ENCODE measurements at regions of chr11 and their contacts with region 1.

Region 1: DNA sequence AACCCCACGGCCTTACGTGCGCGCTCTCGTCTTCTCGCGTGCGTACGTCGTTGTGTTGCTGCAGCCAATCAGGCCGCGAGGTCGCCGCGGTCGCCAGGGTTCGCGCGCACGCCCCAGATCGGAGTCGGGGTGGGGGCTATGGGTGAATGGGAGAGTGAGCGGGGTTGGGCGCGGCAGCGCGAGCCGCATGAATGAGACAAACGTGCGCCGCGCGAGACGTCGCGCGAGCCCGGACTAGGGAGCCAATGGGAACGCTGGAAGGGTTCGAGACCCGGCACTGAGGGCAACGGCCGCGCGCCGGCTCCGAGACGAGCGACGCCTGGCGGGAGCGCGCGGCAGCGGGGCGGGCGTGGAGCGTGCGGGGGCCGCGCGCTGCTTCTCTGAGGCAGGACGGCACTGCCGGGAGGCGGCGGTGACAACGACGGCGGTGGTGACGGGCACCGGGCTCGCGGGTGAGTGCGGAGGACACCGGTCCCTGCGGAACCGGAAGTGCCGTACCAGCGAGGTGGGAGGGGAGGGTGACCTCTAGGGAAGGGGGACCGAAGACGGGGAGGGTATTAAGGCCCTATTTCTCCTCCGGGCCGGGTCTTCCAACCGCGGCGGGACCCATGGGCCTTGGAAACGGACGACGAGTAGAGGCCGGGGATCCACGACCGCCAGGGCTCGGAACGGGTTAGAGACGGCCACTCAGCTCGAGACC is at the start of gene ZDHHC5:
- DNase-seq: peak; percentile 92 to 100 (median 100)
- ATAC-seq: peak; percentile 90
- H3K4me3 ChIP-seq: peak within 1 kb of the TSS; percentile 87
- H3K4me3 Mint-ChIP-seq: peak within 1 kb of the TSS; percentile 84 to 100 (median 91)
- H3K27ac ChIP-seq: peak within 1 kb of the TSS; percentile 97
- H3K27ac Mint-ChIP-seq: peak within 1 kb of the TSS; percentile 97 to 100 (median 98)
- H3K4me1 ChIP-seq: peaks cover 25 to 28% of the 10 kb centered on the region in 2 donors
- H3K4me1 Mint-ChIP-seq: peaks cover 35 to 62% (median 50%) of the 10 kb centered on the region in 7 donors
- H3K27me3 ChIP-seq: no peaks in the 10 kb centered on the region
- H3K27me3 Mint-ChIP-seq: no peaks in the 10 kb centered on the region
- total RNA-seq, gene ZDHHC5: 51.4 to 82.2 (median 59.1) TPM

Region 2: GRCh38 chr11:57085611-57086010 is 582.3 kb before region 1 on chr11:
- CTCF ChIA-PET with region 1: no interaction called
- POLR2A ChIA-PET with region 1: no interaction called
- intact Hi-C with region 1: no loop called
- DNase-seq: no peak
- ATAC-seq: no peak
- H3K4me3 ChIP-seq: no peak overlapping the region
- H3K4me3 Mint-ChIP-seq: no peak overlapping the region
- H3K27ac ChIP-seq: no peak overlapping the region
- H3K27ac Mint-ChIP-seq: no peak overlapping the region
- H3K4me1 ChIP-seq: no peaks in the 10 kb centered on the region
- H3K4me1 Mint-ChIP-seq: no peaks in the 10 kb centered on the region
- H3K27me3 ChIP-seq: no peaks in the 10 kb centered on the region
- H3K27me3 Mint-ChIP-seq: peaks cover 0 to 18% (median 6%) of the 10 kb centered on the region in 5 donors

Region 3: DNA sequence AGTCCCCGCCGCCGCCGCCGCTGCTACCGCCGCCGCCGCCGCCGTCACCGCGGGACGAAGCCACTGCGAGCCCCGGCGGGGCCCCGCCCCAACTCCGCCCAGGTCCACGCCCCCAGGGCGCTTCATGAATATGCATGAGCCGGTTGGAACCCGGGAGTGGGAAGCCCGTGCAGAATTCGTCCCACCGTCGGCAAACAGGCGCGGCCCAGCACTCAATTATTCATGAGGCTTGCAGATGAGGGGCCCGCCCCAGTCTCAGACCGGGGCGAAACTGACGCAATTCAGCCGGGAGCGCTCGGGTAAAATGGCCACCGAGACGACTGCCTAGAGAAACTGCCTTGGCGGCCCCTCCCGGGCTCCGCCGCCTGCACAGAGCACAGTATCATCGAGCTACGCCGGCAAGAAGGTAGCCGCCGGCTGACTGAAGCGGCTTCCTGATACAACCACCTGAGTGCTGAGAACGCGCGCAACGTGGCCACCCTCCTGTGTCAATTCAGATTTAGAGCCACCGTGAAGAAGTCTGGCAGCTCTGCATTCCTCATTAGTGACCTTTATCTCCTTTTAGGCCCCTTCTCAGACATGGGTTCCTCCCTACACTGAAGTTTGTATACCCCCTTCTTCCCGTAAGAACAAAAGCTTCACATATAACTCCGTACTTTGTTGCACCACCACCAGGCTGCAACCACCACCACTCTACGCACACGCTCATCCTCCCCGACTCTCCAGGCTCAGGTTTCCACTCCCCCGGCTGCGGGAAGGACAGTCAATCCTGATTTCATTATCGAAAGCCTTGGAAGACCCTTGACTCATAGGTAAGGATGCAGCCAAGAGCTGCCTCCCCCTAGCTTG is 342.8 kb before region 1 on chr11 and contains the start of gene TNKS1BP1:
- CTCF ChIA-PET with region 1: no interaction called
- POLR2A ChIA-PET with region 1: no interaction called
- intact Hi-C with region 1: loop called (anchors 1 kb)
- DNase-seq: peak; percentile 84 to 92 (median 90)
- ATAC-seq: peak; percentile 91
- H3K4me3 ChIP-seq: peak within 1 kb of the TSS; percentile 73
- H3K4me3 Mint-ChIP-seq: peak within 1 kb of the TSS; percentile 88 to 95 (median 91)
- H3K27ac ChIP-seq: peak within 1 kb of the TSS; percentile 79
- H3K27ac Mint-ChIP-seq: peak within 1 kb of the TSS; percentile 93 to 98 (median 95)
- H3K4me1 ChIP-seq: peaks cover 8 to 14% of the 10 kb centered on the region in 2 donors
- H3K4me1 Mint-ChIP-seq: peaks cover 30 to 58% (median 51%) of the 10 kb centered on the region in 7 donors
- H3K27me3 ChIP-seq: no peaks in the 10 kb centered on the region
- H3K27me3 Mint-ChIP-seq: no peaks in the 10 kb centered on the region
- total RNA-seq, gene TNKS1BP1: 11.2 to 22.0 (median 15.9) TPM

Region 4: DNA sequence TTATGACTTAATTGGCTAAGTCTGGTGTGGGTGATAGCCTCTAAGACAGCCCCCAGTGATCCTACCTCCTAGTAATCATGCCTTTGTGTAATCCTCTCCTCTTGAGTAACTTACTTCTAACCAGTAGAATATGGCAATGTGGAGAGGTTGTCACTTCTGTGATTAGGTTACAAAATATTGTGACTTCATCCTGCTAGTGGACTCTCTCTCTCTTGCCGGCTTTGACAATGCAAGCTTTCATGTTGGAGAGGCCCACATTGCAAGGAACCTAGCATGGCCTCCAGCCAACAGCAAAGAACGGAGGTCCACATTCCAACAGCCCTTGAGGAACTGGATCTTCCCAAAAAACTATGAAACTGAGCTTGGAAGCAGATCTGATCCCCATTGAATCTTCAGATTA is 37.7 kb before region 1 on chr11:
- CTCF ChIA-PET with region 1: no interaction called
- POLR2A ChIA-PET with region 1: no interaction called
- intact Hi-C with region 1: no loop called
- DNase-seq: no peak
- ATAC-seq: no peak
- H3K4me3 ChIP-seq: no peak overlapping the region
- H3K4me3 Mint-ChIP-seq: no peak overlapping the region
- H3K27ac ChIP-seq: no peak overlapping the region
- H3K27ac Mint-ChIP-seq: no peak overlapping the region
- H3K4me1 ChIP-seq: no peaks in the 10 kb centered on the region
- H3K4me1 Mint-ChIP-seq: no peaks in the 10 kb centered on the region
- H3K27me3 ChIP-seq: no peaks in the 10 kb centered on the region
- H3K27me3 Mint-ChIP-seq: peaks cover 9 to 36% (median 24%) of the 10 kb centered on the region in 5 donors

Region 5: DNA sequence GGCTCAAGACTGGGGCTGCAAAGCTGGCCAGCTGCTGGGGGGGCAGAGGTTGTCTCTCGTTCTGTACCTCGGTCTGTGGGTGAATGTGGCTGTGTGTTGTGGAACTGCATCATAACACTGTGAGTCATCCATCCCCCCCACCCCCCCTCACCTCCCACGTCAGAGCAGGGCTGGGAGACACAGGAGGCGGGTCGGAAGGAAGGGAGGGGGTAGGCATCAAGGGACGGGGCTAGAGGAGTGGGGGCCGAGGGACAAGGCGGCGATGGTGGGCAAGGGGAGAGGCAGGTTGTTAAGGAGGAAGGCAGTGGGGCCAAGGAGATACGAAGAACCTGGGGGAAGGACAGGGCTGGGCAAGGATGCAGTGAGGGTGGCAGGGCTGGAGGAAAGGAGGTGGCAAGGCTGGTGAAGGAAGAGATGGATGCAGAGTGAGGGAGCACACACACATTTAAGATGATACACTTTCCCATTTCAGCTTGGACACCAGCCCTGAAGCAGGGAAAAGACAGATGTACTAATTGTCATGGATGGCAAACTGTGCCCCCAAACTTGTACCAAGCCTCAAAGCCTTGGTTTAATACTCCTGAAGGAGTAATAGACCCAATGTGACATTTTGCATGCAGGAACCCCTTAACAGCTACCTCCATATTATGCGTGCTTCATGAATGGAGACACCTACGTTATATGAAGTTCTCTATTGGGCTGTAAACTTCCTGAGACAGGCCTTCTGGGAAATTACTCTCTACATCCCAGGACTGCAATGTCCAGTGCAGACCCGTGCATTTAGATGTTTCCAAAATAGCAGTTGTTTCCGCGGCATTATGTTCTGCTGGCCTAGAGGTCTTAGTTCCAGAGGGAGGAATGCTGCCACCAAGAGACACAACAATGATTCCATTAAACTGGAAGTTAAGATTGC is 17.8 kb before region 1 on chr11 and contains the start of gene YPEL4:
- CTCF ChIA-PET with region 1: interaction called, 3 read pairs
- POLR2A ChIA-PET with region 1: interaction called, 9 read pairs
- intact Hi-C with region 1: loop called (anchors 2 kb)
- DNase-seq: peak in 8 of 9 donors; percentile 47 to 86 (median 62)
- ATAC-seq: peak; percentile 93
- H3K4me3 ChIP-seq: peak within 1 kb of the TSS; percentile 66
- H3K4me3 Mint-ChIP-seq: peak within 1 kb of the TSS; percentile 79 to 93 (median 85)
- H3K27ac ChIP-seq: peak within 1 kb of the TSS; percentile 19
- H3K27ac Mint-ChIP-seq: peak within 1 kb of the TSS; percentile 68 to 93 (median 87)
- H3K4me1 ChIP-seq: peaks cover 11 to 18% of the 10 kb centered on the region in 2 donors
- H3K4me1 Mint-ChIP-seq: peaks cover 28 to 60% (median 48%) of the 10 kb centered on the region in 7 donors
- H3K27me3 ChIP-seq: peaks cover 10 to 16% of the 10 kb centered on the region in 2 donors
- H3K27me3 Mint-ChIP-seq: peaks cover 30 to 46% (median 42%) of the 10 kb centered on the region in 5 donors
- total RNA-seq, gene YPEL4: 0.70 to 13.4 (median 4.3) TPM

Region 6: DNA sequence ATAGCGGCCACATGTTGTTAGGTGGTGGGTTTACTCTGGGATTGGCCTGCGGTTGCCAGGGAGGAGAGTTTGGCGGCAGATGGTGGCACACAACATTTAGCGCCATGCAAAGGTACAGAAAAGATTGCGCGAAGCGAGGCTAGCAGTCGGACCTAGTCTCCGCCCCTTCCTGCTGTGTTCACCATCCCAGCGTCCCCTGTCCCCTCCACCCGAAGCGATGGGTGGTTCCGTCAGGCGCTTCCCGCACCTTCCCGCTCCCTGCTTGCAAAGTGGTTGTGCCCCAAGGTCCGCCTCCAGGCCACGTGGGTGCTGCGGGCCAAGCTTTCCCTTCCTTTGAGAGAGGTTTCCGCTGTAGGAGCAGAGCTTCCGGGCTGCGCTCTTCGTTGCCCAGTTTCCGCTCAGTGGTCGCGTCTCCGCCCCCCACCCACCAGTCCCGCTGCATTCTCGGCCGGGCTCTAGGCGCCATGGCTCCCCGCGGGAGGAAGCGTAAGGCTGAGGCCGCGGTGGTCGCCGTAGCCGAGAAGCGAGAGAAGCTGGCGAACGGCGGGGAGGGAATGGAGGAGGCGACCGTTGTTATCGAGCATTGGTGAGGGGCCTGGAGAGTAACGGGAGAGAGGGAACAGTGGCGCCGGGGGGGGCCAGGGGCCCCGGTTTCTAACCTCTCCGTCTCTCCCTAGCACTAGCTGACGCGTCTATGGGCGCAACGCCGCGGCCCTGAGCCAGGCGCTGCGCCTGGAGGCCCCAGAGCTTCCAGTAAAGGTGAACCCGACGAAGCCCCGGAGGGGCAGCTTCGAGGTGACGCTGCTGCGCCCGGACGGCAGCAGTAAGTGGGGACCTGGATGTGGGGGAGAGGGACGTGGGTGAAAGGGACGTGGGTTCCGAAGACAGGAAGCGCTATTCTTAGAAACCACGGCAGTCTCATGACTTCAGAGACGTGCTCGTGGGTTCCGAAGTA is 73.5 kb after region 1 on chr11 and contains the start of gene SELENOH:
- CTCF ChIA-PET with region 1: no interaction called
- POLR2A ChIA-PET with region 1: interaction called, 7 read pairs
- intact Hi-C with region 1: loop called (anchors 1 kb)
- DNase-seq: peak; percentile 75 to 96 (median 91)
- ATAC-seq: peak; percentile 94
- H3K4me3 ChIP-seq: peak within 1 kb of the TSS; percentile 86
- H3K4me3 Mint-ChIP-seq: peak within 1 kb of the TSS; percentile 90 to 100 (median 99)
- H3K27ac ChIP-seq: peak within 1 kb of the TSS; percentile 93
- H3K27ac Mint-ChIP-seq: peak within 1 kb of the TSS; percentile 97 to 100 (median 98)
- H3K4me1 ChIP-seq: peaks cover 16 to 23% of the 10 kb centered on the region in 2 donors
- H3K4me1 Mint-ChIP-seq: peaks cover 12 to 50% (median 41%) of the 10 kb centered on the region in 7 donors
- H3K27me3 ChIP-seq: no peaks in the 10 kb centered on the region
- H3K27me3 Mint-ChIP-seq: no peaks in the 10 kb centered on the region
- total RNA-seq, gene SELENOH: 93.6 to 193 (median 124) TPM

Region 7: DNA sequence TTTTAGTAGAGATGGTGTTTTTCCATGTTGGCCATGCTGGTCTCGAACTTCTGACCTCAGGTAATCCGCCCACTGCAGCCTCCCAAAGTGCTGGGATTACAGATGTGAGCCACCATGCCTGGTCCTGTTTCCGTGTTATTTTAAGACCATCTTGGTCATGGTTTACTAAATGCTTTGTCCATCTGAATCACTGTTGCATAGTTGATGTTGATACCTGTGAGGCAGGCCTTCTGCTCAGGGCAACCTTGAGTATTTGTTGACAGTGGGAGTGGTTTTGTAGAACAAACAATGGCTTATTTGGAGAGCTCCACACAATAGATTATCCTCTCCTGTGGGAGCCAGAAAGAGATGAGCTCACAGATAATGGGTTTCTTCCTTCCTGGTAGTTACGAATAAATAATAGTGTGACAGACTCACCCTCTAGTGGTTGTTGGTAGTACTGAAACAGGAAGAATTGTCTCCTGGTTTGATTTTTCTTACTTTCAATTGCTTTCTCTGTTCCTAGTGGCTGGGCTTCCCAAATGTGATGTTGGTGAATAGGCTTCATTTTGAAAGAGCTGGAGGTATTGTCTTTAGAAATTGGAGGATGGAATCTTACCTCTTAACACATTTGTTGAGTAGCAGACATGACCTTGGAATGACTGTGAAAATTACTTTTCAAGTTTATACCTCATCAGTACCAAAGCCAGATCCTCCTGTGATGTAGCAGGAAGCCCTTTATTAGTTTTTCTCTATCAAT is 132.7 kb after region 1 on chr11:
- CTCF ChIA-PET with region 1: interaction called, 4 read pairs
- POLR2A ChIA-PET with region 1: no interaction called
- intact Hi-C with region 1: loop called (anchors 1 kb)
- DNase-seq: peak in 7 of 9 donors; percentile 46 to 70 (median 64)
- ATAC-seq: peak; percentile 93
- H3K4me3 ChIP-seq: no peak overlapping the region
- H3K4me3 Mint-ChIP-seq: peak overlapping the region in 6 of 10 donors; percentile 33 to 57 (median 54)
- H3K27ac ChIP-seq: peak overlapping the region; percentile 39
- H3K27ac Mint-ChIP-seq: peak overlapping the region; percentile 42 to 92 (median 80)
- H3K4me1 ChIP-seq: peaks cover 8 to 10% of the 10 kb centered on the region in 2 donors
- H3K4me1 Mint-ChIP-seq: peaks cover 22 to 40% (median 30%) of the 10 kb centered on the region in 7 donors
- H3K27me3 ChIP-seq: no peaks in the 10 kb centered on the region
- H3K27me3 Mint-ChIP-seq: no peaks in the 10 kb centered on the region

Region 8: GRCh38 chr11:58524232-58525036 is 856.5 kb after region 1 on chr11:
- CTCF ChIA-PET with region 1: interaction called, 3 read pairs
- POLR2A ChIA-PET with region 1: no interaction called
- intact Hi-C with region 1: loop called (anchors 2 to 5 kb)
- DNase-seq: peak in 8 of 9 donors; percentile 39 to 78 (median 70)
- ATAC-seq: peak; percentile 78
- H3K4me3 ChIP-seq: peak overlapping the region; percentile 10
- H3K4me3 Mint-ChIP-seq: peak overlapping the region; percentile 65 to 85 (median 80)
- H3K27ac ChIP-seq: peak overlapping the region; percentile 75
- H3K27ac Mint-ChIP-seq: peak overlapping the region; percentile 84 to 99 (median 97)
- H3K4me1 ChIP-seq: peaks cover 18 to 50% of the 10 kb centered on the region in 2 donors
- H3K4me1 Mint-ChIP-seq: peaks cover 27 to 90% (median 54%) of the 10 kb centered on the region in 7 donors
- H3K27me3 ChIP-seq: no peaks in the 10 kb centered on the region
- H3K27me3 Mint-ChIP-seq: no peaks in the 10 kb centered on the region

Region 9: DNA sequence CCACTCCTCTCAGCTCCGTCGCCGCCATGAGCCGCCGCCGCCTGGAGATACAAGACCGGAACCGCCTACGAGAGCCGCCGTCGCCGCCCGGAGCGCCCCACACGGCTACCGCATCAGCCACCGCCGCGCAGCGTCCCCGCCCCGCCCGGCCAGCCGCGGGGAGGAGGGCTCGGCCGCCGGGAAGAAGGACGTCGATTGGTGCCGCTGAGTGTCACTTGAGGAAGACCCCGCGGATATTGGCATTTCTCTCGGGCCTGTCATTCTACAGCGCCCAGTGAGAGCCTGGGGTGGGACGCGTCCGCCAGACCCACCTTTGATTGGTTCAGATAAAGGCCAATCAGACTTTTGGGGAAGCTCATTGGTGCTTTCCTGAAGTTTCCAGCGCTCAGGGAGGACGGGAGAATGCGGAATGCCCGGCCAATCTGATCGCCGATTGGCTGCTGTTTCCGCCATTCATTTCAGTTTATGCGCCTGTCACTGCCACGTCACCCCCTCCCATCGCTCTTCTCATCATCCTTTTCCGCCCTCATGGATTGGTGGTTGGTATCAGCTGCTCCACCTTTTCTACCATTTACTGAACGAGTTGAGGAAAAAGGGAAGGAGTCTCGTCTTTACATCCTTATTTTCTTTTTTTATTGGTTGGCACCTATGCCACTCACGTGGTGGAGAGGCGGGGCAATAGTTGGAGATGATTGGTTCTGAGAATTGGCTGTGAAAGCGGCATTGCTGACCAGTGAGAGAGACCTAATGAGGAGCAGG is 1947.9 kb after region 1 on chr11 and contains the start of gene OSBP:
- CTCF ChIA-PET with region 1: no interaction called
- POLR2A ChIA-PET with region 1: no interaction called
- intact Hi-C with region 1: loop called (anchors 1 to 5 kb)
- DNase-seq: peak; percentile 86 to 100 (median 99)
- ATAC-seq: peak; percentile 84
- H3K4me3 ChIP-seq: peak within 1 kb of the TSS; percentile 72
- H3K4me3 Mint-ChIP-seq: peak within 1 kb of the TSS; percentile 82 to 99 (median 94)
- H3K27ac ChIP-seq: peak within 1 kb of the TSS; percentile 93
- H3K27ac Mint-ChIP-seq: peak within 1 kb of the TSS; percentile 84 to 98 (median 94)
- H3K4me1 ChIP-seq: peaks cover 26 to 29% of the 10 kb centered on the region in 2 donors
- H3K4me1 Mint-ChIP-seq: peaks cover 35 to 54% (median 41%) of the 10 kb centered on the region in 7 donors
- H3K27me3 ChIP-seq: no peaks in the 10 kb centered on the region
- H3K27me3 Mint-ChIP-seq: no peaks in the 10 kb centered on the region
- total RNA-seq, gene OSBP: 39.8 to 57.6 (median 52.4) TPM

Measured in naive thymus-derived CD4-positive, alpha-beta T cell (primary cell).